Activated CD8-positive, alpha-beta T cell treated with anti-CD3 and anti-CD28 coated beads for 36 hours (primary cell): ENCODE measurements at regions of chr20 and their contacts with region 1.

Region 1: DNA sequence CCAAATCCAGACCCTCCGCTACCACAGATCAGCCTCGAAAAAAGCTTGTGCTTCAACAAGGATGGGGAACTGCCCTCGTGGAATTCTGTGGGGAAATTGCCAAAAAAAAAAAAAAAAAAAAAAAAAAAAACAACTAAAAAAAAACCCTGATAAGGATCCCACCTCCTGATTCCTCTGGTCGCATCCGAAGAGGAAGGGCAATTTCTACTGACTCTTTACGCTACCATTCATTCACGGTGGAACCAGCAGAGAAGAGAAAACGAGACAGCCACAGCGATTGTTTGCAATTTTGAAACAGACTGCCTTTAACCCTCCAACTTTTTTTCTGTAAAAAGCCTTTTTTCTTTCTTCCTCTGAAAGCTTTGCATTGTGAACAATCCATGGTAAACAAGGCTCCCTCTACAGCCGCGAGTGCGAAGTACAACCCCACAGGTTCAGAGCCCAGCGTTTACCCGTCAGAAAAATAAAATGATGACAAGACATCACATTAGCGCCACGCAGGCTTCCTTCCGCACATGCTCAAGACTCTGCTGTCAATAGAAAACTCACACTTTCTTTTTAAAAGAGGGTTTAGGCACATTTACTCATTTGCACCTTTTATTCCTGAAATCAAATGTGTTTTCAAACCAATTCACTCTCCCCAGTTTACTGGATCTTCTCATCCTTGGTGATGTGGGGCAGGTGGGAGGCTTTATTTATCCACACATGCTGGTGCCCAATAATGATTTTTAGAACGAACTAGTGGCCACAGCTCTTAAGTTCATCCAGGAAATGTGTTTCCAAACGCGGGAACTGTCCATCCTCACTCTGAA is 100.0 kb downstream of the NOL4L start:
- DNase-seq: peak; percentile 95
- ATAC-seq: peak; percentile 87
- H3K4me3 Mint-ChIP-seq: peak overlapping the region; percentile 81
- H3K27ac Mint-ChIP-seq: peak overlapping the region; percentile 91
- H3K4me1 Mint-ChIP-seq: peaks cover 33% of the 10 kb centered on the region
- H3K27me3 Mint-ChIP-seq: no peaks in the 10 kb centered on the region
- CTCF ChIP-seq: peak; percentile 90

Region 2: GRCh38 chr20:32497589-32498224 is 12.5 kb after region 1 on chr20:
- CTCF ChIA-PET with region 1: interaction called, 23 read pairs
- POLR2A ChIA-PET with region 1: interaction called, 3 read pairs
- intact Hi-C with region 1: no loop called
- DNase-seq: no peak
- ATAC-seq: no peak
- H3K4me3 Mint-ChIP-seq: no peak overlapping the region
- H3K27ac Mint-ChIP-seq: no peak overlapping the region
- H3K4me1 Mint-ChIP-seq: peaks cover 29% of the 10 kb centered on the region
- H3K27me3 Mint-ChIP-seq: no peaks in the 10 kb centered on the region
- CTCF ChIP-seq: no peak

Region 3: GRCh38 chr20:32509639-32510066 is 24.5 kb after region 1 on chr20:
- CTCF ChIA-PET with region 1: interaction called, 14 read pairs
- POLR2A ChIA-PET with region 1: interaction called, 15 read pairs
- intact Hi-C with region 1: no loop called
- DNase-seq: peak; percentile 91
- ATAC-seq: peak; percentile 70
- H3K4me3 Mint-ChIP-seq: peak overlapping the region; percentile 79
- H3K27ac Mint-ChIP-seq: peak overlapping the region; percentile 93
- H3K4me1 Mint-ChIP-seq: peaks cover 87% of the 10 kb centered on the region
- H3K27me3 Mint-ChIP-seq: no peaks in the 10 kb centered on the region
- CTCF ChIP-seq: no peak

Region 4: GRCh38 chr20:32556312-32557184 is 71.4 kb after region 1 on chr20:
- CTCF ChIA-PET with region 1: no interaction called
- POLR2A ChIA-PET with region 1: no interaction called
- intact Hi-C with region 1: no loop called
- DNase-seq: no peak
- ATAC-seq: no peak
- H3K4me3 Mint-ChIP-seq: no peak overlapping the region
- H3K27ac Mint-ChIP-seq: peak overlapping the region; percentile 20
- H3K4me1 Mint-ChIP-seq: peaks cover 73% of the 10 kb centered on the region
- H3K27me3 Mint-ChIP-seq: no peaks in the 10 kb centered on the region
- CTCF ChIP-seq: no peak

Region 5: GRCh38 chr20:32582659-32583580 is 97.8 kb after region 1 on chr20:
- CTCF ChIA-PET with region 1: no interaction called
- POLR2A ChIA-PET with region 1: no interaction called
- intact Hi-C with region 1: no loop called
- DNase-seq: peak; percentile 37
- ATAC-seq: no peak
- H3K4me3 Mint-ChIP-seq: peak overlapping the region; percentile 70
- H3K27ac Mint-ChIP-seq: no peak overlapping the region
- H3K4me1 Mint-ChIP-seq: peaks cover 48% of the 10 kb centered on the region
- H3K27me3 Mint-ChIP-seq: no peaks in the 10 kb centered on the region
- CTCF ChIP-seq: no peak